K562 (cell line): ENCODE measurements at regions of chr17 and their contacts with region 1.

Region 1: DNA sequence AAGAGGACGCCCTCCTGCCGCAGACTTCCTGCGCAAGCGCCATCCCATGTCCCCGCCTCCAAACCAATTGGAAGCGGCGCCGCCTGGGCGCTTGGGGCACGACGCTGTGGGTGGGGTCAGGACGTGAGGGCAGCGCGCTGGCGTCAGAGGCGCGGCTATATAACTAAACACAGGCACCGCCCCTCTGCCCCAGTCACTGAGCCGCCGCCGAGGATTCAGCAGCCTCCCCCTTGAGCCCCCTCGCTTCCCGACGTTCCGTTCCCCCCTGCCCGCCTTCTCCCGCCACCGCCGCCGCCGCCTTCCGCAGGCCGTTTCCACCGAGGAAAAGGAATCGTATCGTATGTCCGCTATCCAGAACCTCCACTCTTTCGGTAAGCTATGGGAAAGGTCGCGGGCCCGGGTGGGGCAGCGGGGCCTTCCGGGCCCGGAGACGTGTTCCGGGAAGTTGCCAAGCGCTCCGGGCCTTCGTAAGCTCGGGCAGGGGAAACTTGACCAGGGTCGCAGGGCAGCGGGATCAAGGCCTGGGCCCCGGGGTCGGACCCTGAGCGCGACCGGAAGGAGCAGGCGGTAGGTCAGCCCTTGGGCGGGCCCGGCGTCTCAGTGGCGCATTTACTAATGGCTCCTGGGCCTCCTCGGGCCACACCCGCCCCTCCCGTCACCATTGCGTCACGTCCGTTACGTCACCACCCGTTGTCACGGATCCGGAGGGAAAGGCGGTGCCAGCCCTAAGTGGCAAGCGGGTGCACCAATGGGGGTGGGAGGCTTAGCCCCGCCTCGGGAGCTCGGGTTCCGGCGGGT is at the start of gene EIF1:
- DNase-seq: peak; percentile 96 to 100 (median 98)
- ATAC-seq: peak; percentile 83
- H3K4me3 ChIP-seq: peak within 1 kb of the TSS; percentile 58
- H3K27ac ChIP-seq: peak within 1 kb of the TSS; percentile 92
- H3K4me1 ChIP-seq: peaks cover 11 to 18% of the 10 kb centered on the region in 2 experiments; a peak in 4 of 5 replicates
- H3K27me3 ChIP-seq: no peaks in the 10 kb centered on the region
- CTCF ChIP-seq: no peak
- EP300 ChIP-seq: peak; percentile 59
- POLR2A ChIP-seq: peak; percentile 100
- RAD21 ChIP-seq: no peak
- polyA plus RNA-seq, gene EIF1: 1,018 to 1,204 TPM

Region 2: GRCh38 chr17:41284043-41284442 is 404.9 kb before region 1 on chr17:
- CTCF ChIA-PET with region 1: no interaction called
- POLR2A ChIA-PET with region 1: no interaction called
- in situ Hi-C with region 1: no loop called
- intact Hi-C with region 1: no loop called
- DNase-seq: peak in 3 of 4 experiments; percentile 0
- ATAC-seq: no peak
- H3K4me3 ChIP-seq: no peak overlapping the region
- H3K27ac ChIP-seq: no peak overlapping the region
- H3K4me1 ChIP-seq: no peaks in the 10 kb centered on the region
- H3K27me3 ChIP-seq: peaks cover 0 to 4% of the 10 kb centered on the region in 2 experiments; a peak in 1 of 5 replicates
- CTCF ChIP-seq: no peak
- EP300 ChIP-seq: no peak
- POLR2A ChIP-seq: no peak
- RAD21 ChIP-seq: no peak

Region 3: GRCh38 chr17:41548844-41549595 is 139.9 kb before region 1 on chr17:
- CTCF ChIA-PET with region 1: interaction called, 3 read pairs
- POLR2A ChIA-PET with region 1: interaction called, 15 read pairs
- in situ Hi-C with region 1: no loop called
- intact Hi-C with region 1: no loop called
- DNase-seq: peak; percentile 91 to 92 (median 91)
- ATAC-seq: peak; percentile 97
- H3K4me3 ChIP-seq: no peak overlapping the region
- H3K27ac ChIP-seq: peak overlapping the region; percentile 56; the same call in 2 of the 3 replicates
- H3K4me1 ChIP-seq: peaks cover 31 to 34% of the 10 kb centered on the region in 2 experiments
- H3K27me3 ChIP-seq: peaks cover 0 to 4% of the 10 kb centered on the region in 2 experiments; a peak in 1 of 5 replicates
- CTCF ChIP-seq: peak; percentile 93 to 95 (median 95); a peak in 5 of 6 replicates
- EP300 ChIP-seq: no peak
- POLR2A ChIP-seq: no peak
- RAD21 ChIP-seq: peak; percentile 89 to 95

Region 4: GRCh38 chr17:41717408-41718286 is 28.7 kb after region 1 on chr17:
- CTCF ChIA-PET with region 1: no interaction called
- POLR2A ChIA-PET with region 1: interaction called, 76 read pairs
- in situ Hi-C with region 1: no loop called
- intact Hi-C with region 1: no loop called
- DNase-seq: no peak
- ATAC-seq: 0 out of 3 replicates have a peak, but pooled peaks have one; percentile 32
- H3K4me3 ChIP-seq: no peak overlapping the region
- H3K27ac ChIP-seq: no peak overlapping the region
- H3K4me1 ChIP-seq: 0 out of 5 replicates have a peak, but pooled peaks cover 0 to 3% of the 10 kb centered on the region in 2 experiments
- H3K27me3 ChIP-seq: peaks cover 7 to 11% of the 10 kb centered on the region in 2 experiments; a peak in 4 of 5 replicates
- CTCF ChIP-seq: no peak
- EP300 ChIP-seq: no peak
- POLR2A ChIP-seq: no peak
- RAD21 ChIP-seq: no peak

Region 5: DNA sequence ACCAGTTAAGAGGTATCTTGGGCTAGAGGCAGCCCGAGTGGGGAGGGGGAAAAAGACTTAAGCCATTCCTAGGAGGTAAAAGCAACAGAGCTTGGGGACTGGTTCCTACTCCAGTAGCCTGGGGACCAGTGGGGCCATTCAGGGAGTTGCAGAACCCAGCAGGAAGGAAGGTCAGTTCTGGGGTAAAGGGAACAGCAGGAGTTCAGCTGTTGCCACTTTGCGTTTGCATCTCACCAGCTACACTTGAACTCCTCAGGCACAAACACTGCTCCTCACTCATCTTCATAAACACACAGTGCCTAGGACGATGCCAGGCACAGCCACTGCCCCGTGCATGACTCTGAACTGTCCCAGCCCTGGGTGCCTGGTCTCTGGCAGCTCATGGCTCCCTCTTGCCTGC is 41.6 kb after region 1 on chr17:
- CTCF ChIA-PET with region 1: no interaction called
- POLR2A ChIA-PET with region 1: interaction called, 21 read pairs
- in situ Hi-C with region 1: no loop called
- intact Hi-C with region 1: no loop called
- DNase-seq: no peak
- ATAC-seq: peak; percentile 7; the same call in 1 of the 3 replicates
- H3K4me3 ChIP-seq: no peak overlapping the region
- H3K27ac ChIP-seq: no peak overlapping the region
- H3K4me1 ChIP-seq: peaks cover 3 to 28% of the 10 kb centered on the region in 2 experiments; a peak in 3 of 5 replicates
- H3K27me3 ChIP-seq: peaks cover 23 to 42% of the 10 kb centered on the region in 2 experiments; a peak in 4 of 5 replicates
- CTCF ChIP-seq: no peak
- EP300 ChIP-seq: no peak
- POLR2A ChIP-seq: no peak
- RAD21 ChIP-seq: no peak

Region 6: DNA sequence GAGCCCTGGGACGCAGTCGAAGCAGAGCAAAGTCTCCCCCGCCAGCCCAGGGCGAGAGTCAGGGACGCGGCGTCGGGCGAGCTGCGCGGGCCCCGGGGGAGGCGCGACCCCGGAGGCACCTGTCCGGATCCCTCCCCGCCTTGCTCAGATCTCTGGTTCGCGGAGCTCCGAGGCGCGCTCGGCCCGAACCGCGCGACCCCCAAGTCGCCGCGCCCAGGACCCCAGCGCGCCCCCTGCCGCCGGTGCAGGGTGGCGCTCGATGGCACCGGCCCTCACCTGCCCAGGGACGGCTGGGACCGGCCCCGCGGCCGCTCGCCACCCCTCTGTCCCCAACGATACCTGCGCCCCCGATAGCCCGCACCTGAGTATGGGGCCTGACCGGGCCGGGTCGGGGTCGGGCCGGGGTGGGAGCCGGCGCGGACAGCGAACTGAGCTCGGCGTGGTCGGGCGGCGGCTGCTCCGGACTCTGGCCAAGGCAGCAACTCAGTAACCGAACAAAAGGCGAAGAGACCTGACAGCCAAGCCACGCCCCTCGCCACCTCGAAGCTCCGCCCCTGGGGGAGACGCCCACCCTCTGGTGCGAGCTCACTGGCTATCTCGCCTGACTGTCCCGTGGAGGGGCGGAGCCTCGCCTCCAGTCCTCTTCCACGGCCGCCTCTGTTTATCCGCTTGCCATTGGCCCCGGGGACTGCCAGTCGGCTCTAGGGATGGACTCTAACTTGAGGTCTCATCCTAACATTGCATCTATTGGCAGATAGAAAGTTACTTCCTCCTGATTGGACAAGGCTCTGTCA is 97.5 kb after region 1 on chr17 and contains the start of gene JUP:
- CTCF ChIA-PET with region 1: no interaction called
- POLR2A ChIA-PET with region 1: interaction called, 30 read pairs
- in situ Hi-C with region 1: no loop called
- intact Hi-C with region 1: no loop called
- DNase-seq: peak; percentile 98 to 99 (median 98)
- ATAC-seq: peak; percentile 93
- H3K4me3 ChIP-seq: peak within 1 kb of the TSS; percentile 59
- H3K27ac ChIP-seq: peak within 1 kb of the TSS; percentile 89
- H3K4me1 ChIP-seq: peaks cover 31 to 45% of the 10 kb centered on the region in 2 experiments
- H3K27me3 ChIP-seq: no peaks in the 10 kb centered on the region
- CTCF ChIP-seq: peak; percentile 68 to 81 (median 80)
- EP300 ChIP-seq: no peak
- POLR2A ChIP-seq: peak; percentile 92
- RAD21 ChIP-seq: peak in 1 of 2 experiments; percentile 59; a peak in 2 of 4 replicates
- polyA plus RNA-seq, gene JUP: 6.4 to 8.2 TPM